Left ventricle myocardium superior (tissue), 1 donor: ENCODE measurements at regions of chrX and their contacts with region 1.

Region 1: GRCh38 chrX:23919706-23920320 is 12.0 kb downstream of the CXorf58 start:
- DNase-seq: no peak
- ATAC-seq: no peak

Region 2: GRCh38 chrX:24024819-24025740 is 105.3 kb after region 1 on chrX:
- intact Hi-C with region 1: loop called (anchors 5 kb)
- DNase-seq: peak; percentile 92
- ATAC-seq: peak; percentile 94